Tibial artery (tissue), 4 donors: ENCODE measurements at regions of chr1 and their contacts with region 1.

Region 1: GRCh38 chr1:155989242-155990004 is 11.1 kb upstream of the ARHGEF2 start:
- DNase-seq: peak; percentile 70 to 87
- H3K4me3 ChIP-seq: peak overlapping the region; percentile 50 to 54
- H3K27ac ChIP-seq: peak overlapping the region; percentile 68 to 79
- H3K4me1 ChIP-seq: peaks cover 0 to 28% (median 9%) of the 10 kb centered on the region in 4 donors
- H3K27me3 ChIP-seq: no peaks in the 10 kb centered on the region
- CTCF ChIP-seq: peak; percentile 99 to 100

Region 2: GRCh38 chr1:155934097-155934935 is 55.1 kb before region 1 on chr1 and contains the start of gene KHDC4:
- intact Hi-C with region 1: loop called (anchors 2 kb)
- DNase-seq: peak; percentile 97 to 98
- H3K4me3 ChIP-seq: peak within 1 kb of the TSS; percentile 78 to 84
- H3K27ac ChIP-seq: peak within 1 kb of the TSS; percentile 89 to 94
- H3K4me1 ChIP-seq: peaks cover 4 to 56% (median 42%) of the 10 kb centered on the region in 4 donors
- H3K27me3 ChIP-seq: no peaks in the 10 kb centered on the region
- CTCF ChIP-seq: peak in 1 of 2 experiments; percentile 15

Region 3: GRCh38 chr1:155951753-155952504 is 37.5 kb before region 1 on chr1:
- intact Hi-C with region 1: no loop called
- DNase-seq: no peak
- H3K4me3 ChIP-seq: no peak overlapping the region
- H3K27ac ChIP-seq: no peak overlapping the region
- H3K4me1 ChIP-seq: no peaks in the 10 kb centered on the region
- H3K27me3 ChIP-seq: no peaks in the 10 kb centered on the region
- CTCF ChIP-seq: no peak